ENCODE measurements at regions of chr16 and their contacts with region 1.

Region 1: GRCh38 chr16:85491058-85491771 is 121.9 kb upstream of the GSE1 start:
- DNase-seq: peak; percentile 72
- ATAC-seq: peak; percentile 88
- H3K4me3 Mint-ChIP-seq: no peak overlapping the region
- H3K27ac Mint-ChIP-seq: no peak overlapping the region
- H3K4me1 Mint-ChIP-seq: peaks cover 19% of the 10 kb centered on the region
- H3K27me3 Mint-ChIP-seq: no peaks in the 10 kb centered on the region
- CTCF ChIP-seq: peak; percentile 76

Region 2: DNA sequence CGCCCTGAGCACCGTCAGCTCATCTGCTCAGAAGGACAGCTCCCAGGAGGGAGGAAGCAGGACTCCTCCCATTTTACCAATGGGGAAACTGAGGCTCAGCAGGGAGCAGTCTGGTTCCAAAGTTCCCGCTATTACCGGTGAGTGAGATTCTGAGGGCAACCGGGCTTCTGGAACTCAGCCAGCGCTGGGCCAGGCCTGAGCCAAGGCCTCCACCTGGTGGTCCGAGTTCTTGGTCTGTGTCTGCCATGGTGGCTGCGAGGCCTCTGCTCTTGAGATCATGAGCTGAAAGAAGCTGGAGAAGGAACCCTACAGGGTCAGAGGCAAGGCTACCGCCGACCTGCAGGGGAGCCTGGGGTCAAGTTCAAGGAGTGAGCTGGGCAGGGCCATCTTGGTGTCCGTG is 11.1 kb after region 1 on chr16:
- CTCF ChIA-PET with region 1: interaction called, 10 read pairs
- POLR2A ChIA-PET with region 1: no interaction called
- intact Hi-C with region 1: no loop called
- DNase-seq: no peak
- ATAC-seq: no peak
- H3K4me3 Mint-ChIP-seq: no peak overlapping the region
- H3K27ac Mint-ChIP-seq: no peak overlapping the region
- H3K4me1 Mint-ChIP-seq: no peaks in the 10 kb centered on the region
- H3K27me3 Mint-ChIP-seq: no peaks in the 10 kb centered on the region
- CTCF ChIP-seq: no peak

Measured in activated CD8-positive, alpha-beta T cell treated with anti-CD3 and anti-CD28 coated beads for 36 hours (primary cell).